A549 (cell line): ENCODE measurements at regions of chr17 and their contacts with region 1.

Region 1: DNA sequence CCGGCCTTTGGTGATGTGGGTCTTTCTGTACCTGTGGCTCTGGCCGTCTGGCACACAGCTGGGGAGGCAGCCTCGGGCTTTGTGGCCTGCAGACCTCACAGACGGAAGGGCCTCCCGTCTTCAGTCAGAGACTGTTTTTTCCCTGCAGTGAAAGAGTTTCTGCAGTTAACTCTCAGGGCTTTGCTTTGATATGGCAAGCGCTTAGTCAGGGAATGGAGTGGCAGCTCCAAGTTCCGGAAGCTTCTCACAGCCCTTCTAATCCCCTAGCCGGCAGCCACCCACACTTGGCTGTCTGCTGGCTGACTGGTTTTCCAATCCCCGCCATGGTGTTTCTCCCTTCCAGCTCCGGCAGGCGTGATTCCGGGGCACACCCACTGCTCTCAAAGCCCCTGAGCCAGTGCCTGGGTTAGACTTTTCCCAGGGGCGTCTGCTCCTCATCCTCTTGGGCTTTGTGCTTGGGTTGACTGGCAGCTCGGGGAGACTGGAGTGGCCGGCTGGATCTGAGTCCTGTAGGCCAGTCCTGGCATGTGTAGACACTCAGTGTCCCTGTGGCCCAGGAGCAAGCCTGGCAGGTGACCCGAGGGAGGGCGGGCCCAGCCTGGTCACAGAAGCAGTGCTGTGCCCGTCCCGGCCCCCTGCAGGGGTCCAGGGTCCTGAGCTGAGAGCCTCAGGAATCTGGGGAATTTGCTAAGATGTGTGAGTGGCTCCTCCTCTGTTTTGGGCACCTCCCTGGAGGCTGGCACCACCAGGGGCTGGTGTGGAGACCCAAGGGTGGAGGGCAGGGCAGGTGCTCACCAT is 29.9 kb downstream of the BAIAP2 start:
- DNase-seq: no peak
- ATAC-seq: no peak
- H3K4me3 ChIP-seq: no peak overlapping the region
- H3K27ac ChIP-seq: no peak overlapping the region
- H3K4me1 ChIP-seq: no peaks in the 10 kb centered on the region
- CTCF ChIP-seq: no peak
- EP300 ChIP-seq: no peak
- POLR2A ChIP-seq: no peak
- RAD21 ChIP-seq: no peak

Region 2: DNA sequence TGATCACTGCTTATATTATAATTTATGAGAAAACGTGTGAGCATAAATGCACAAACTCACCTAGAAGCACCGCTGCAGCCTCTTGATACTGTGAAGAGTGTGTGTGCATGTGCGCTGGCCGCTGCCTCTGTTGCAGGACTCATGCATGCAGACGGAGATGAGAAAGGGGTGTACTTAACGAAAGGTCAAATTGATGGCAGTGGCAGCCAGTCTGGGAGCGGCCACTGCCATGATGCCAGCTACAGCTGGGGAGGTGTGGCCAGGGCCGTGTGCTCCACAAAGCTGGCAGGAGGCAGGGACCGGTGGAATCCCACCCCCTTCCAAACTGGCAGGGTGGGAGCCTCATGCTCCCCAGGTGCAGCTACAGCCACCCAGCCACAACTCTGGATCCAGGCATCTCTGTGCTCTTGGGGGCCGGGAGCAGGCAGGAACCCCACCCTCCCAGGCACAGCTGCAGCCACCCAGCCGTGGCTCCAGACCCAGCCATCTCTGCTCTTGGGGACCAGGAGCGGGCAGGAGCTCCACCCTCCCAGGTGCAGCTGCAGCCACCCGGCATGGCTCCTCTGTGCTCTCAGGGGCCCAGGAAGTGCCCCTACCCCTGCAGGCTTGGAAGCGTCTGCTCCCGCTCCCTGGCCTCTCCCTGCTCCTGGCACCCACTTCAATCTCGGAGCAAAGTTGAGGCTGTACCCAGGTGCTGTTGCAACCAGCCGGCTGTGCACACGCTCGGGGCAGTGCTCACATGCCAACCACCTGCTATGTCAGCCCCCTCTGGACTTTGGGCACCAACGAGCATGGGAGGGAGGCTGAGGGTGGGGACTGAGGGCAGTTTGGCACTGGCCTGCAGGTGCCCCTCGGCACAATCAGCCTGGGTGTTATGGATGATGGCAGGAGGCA is 150.7 kb before region 1 on chr17:
- CTCF ChIA-PET with region 1: no interaction called
- POLR2A ChIA-PET with region 1: no interaction called
- DNase-seq: no peak
- ATAC-seq: no peak
- H3K4me3 ChIP-seq: no peak overlapping the region
- H3K27ac ChIP-seq: no peak overlapping the region
- H3K4me1 ChIP-seq: no peaks in the 10 kb centered on the region
- CTCF ChIP-seq: no peak
- EP300 ChIP-seq: no peak
- POLR2A ChIP-seq: no peak
- RAD21 ChIP-seq: no peak

Region 3: DNA sequence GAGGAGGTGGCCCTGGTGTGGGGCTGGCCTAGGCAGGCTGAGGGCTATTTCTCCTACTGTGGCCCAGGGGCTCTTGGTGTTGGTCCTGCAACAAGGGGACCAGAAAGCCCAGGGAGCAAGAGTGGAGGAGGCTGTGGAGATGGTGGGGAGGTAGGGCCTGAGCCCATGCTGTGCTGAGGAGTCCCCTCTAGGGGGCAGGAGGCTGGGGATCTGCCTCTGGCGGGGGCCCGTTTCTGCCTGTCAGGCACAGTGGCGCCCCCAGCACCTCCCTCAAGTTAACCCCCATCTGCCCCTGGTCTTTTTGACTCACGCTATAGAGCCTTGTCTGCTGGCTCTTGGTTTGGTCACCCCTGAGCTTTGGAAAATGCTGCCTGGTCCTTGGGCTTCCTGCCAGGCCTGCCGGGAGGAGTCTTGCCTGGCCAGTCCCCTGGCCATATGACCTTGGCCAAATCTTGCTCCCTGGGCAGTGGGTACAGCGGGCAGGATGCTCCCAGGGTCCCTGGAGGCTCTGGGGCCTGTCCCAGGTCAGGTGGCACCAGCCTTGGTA is 24.0 kb before region 1 on chr17:
- CTCF ChIA-PET with region 1: interaction called, 10 read pairs
- POLR2A ChIA-PET with region 1: no interaction called
- DNase-seq: peak; percentile 45 to 77
- ATAC-seq: peak; percentile 48 to 74
- H3K4me3 ChIP-seq: no peak overlapping the region
- H3K27ac ChIP-seq: peak overlapping the region; percentile 70 to 83
- H3K4me1 ChIP-seq: peaks cover 55% of the 10 kb centered on the region
- CTCF ChIP-seq: peak; percentile 55
- EP300 ChIP-seq: no peak
- POLR2A ChIP-seq: no peak
- RAD21 ChIP-seq: no peak